Activated CD4-positive, alpha-beta memory T cell treated with anti-CD3 and anti-CD28 coated beads, Interleukin-2, amount 10 ng/mL, durations not matched to agents 7 days and 5 days (primary cell): ENCODE measurements at regions of chr14 and their contacts with region 1.

Region 1: DNA sequence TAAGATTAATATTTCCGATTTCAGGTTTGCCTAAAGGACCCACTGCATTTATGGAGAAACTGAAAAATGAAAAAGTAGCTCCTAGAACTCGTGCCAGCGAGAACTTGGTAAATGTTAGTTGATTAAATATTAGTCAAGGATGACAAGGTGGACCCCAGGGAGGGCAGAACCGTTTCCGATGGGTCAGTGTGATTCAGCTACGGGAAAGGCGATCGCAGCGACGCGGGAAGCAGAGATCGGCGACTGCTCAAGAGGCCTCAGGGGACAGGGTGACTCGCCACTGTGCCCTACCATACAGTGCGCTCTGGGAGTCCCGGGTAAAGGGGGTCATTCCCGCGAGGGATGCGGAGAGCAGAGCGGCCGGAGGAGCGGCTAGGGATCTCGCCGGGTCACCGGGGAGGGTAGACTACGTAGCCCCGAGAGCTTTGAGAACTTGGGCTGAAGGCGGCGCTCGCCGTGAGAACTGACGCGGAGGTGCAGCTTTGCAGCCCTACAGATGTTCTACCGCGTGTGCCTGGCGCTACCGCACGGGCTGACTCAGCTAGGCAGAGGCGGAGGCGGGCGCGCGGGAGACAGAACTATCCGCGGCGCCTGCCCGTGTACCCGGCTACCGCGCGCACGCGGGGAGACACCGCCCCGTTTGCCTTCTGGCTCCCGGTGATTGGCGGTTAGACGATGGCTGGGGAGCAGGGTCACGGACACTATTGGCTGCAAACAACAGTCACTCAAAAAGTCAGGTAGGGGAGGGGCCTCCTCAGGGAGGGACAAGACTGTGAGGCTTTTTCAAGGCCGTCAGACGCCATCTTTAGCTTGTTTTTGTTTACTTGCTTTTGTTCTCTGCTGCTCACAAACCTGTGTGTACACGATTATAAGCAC is 3.2 kb downstream of the C14orf93 start:
- DNase-seq: peak; percentile 98
- H3K4me3 Mint-ChIP-seq: peak overlapping the region; percentile 93
- H3K27ac Mint-ChIP-seq: peak overlapping the region; percentile 94
- H3K4me1 Mint-ChIP-seq: peaks cover 51% of the 10 kb centered on the region
- H3K27me3 Mint-ChIP-seq: no peaks in the 10 kb centered on the region

Region 2: GRCh38 chr14:22829661-22830442 is 176.9 kb before region 1 on chr14 and contains the start of gene MRPL52:
- CTCF ChIA-PET with region 1: no interaction called
- POLR2A ChIA-PET with region 1: interaction called, 10 read pairs
- DNase-seq: peak; percentile 93
- H3K4me3 Mint-ChIP-seq: peak within 1 kb of the TSS; percentile 87
- H3K27ac Mint-ChIP-seq: peak within 1 kb of the TSS; percentile 90
- H3K4me1 Mint-ChIP-seq: peaks cover 33% of the 10 kb centered on the region
- H3K27me3 Mint-ChIP-seq: no peaks in the 10 kb centered on the region
- total RNA-seq, gene MRPL52: 108 to 119 TPM

Region 3: GRCh38 chr14:22900081-22900799 is 106.5 kb before region 1 on chr14:
- CTCF ChIA-PET with region 1: no interaction called
- POLR2A ChIA-PET with region 1: no interaction called
- DNase-seq: peak; percentile 48
- H3K4me3 Mint-ChIP-seq: no peak overlapping the region
- H3K27ac Mint-ChIP-seq: peak overlapping the region; percentile 44
- H3K4me1 Mint-ChIP-seq: peaks cover 19% of the 10 kb centered on the region
- H3K27me3 Mint-ChIP-seq: no peaks in the 10 kb centered on the region

Region 4: DNA sequence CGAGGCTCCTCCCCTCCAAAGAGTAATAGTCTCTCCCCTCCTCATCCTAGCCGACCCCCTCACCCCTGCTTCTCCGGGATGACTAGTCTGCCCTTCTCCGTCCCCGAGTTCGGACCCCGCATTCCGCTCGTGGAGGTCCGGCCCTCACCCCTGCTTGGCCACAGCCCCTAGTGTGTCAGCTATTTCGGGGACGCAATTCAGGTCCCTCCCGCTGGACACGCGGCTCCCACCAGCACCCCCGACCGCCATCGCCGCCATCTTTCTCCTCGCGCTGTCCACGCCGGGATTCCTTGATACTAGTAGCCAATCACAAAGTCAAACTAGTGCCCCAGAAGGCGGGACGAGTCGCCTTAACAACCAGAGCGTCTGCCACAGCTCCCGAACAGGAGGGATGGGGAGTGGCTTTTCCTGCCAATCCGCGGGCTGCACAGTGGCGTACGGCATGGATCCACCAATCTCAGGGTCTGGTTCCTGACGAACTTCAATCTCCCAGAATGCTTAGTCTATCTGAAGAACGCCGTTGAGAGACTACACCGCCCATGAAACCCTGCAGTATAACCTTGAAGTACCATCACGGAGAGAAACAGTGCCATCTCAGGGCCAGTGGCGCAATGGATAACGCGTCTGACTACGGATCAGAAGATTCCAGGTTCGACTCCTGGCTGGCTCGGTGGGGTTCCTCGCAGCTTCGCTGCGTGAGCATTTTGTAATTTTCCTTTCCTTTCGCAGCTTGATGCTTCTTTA is 77.5 kb before region 1 on chr14 and contains the start of gene PRMT5:
- CTCF ChIA-PET with region 1: interaction called, 17 read pairs
- POLR2A ChIA-PET with region 1: interaction called, 9 read pairs
- DNase-seq: peak; percentile 97
- H3K4me3 Mint-ChIP-seq: no peak within 1 kb of the TSS
- H3K27ac Mint-ChIP-seq: no peak within 1 kb of the TSS
- H3K4me1 Mint-ChIP-seq: peaks cover 21% of the 10 kb centered on the region
- H3K27me3 Mint-ChIP-seq: no peaks in the 10 kb centered on the region
- total RNA-seq, gene PRMT5: 46.3 to 49.8 TPM

Region 5: DNA sequence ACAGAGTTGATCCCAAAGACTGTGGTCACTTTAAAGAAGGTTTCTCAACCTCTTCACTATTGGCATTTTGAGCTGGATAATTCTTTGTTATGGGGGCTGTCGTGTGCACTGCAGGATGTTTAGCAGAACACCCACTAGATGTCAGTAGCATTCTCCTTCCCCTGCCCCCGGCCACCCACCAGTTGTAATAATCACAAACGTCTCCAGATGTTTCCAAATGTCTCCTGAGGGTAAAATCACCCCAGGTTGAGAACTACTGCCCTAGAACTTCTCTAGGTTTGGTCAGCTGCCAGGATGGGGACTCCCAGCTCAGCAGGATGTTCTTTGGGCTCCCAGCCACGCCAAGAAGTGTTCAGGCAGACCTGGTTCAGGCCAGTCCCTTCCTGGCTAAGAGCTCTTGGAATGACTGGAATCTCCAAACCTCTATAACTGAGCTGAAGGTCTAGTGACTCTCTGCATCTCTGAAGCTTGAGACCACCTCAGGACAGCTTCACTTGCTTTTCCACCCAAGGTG is 12.0 kb before region 1 on chr14:
- CTCF ChIA-PET with region 1: interaction called, 32 read pairs
- POLR2A ChIA-PET with region 1: interaction called, 48 read pairs
- DNase-seq: peak; percentile 29
- H3K4me3 Mint-ChIP-seq: no peak overlapping the region
- H3K27ac Mint-ChIP-seq: no peak overlapping the region
- H3K4me1 Mint-ChIP-seq: no peaks in the 10 kb centered on the region
- H3K27me3 Mint-ChIP-seq: no peaks in the 10 kb centered on the region

Region 6: DNA sequence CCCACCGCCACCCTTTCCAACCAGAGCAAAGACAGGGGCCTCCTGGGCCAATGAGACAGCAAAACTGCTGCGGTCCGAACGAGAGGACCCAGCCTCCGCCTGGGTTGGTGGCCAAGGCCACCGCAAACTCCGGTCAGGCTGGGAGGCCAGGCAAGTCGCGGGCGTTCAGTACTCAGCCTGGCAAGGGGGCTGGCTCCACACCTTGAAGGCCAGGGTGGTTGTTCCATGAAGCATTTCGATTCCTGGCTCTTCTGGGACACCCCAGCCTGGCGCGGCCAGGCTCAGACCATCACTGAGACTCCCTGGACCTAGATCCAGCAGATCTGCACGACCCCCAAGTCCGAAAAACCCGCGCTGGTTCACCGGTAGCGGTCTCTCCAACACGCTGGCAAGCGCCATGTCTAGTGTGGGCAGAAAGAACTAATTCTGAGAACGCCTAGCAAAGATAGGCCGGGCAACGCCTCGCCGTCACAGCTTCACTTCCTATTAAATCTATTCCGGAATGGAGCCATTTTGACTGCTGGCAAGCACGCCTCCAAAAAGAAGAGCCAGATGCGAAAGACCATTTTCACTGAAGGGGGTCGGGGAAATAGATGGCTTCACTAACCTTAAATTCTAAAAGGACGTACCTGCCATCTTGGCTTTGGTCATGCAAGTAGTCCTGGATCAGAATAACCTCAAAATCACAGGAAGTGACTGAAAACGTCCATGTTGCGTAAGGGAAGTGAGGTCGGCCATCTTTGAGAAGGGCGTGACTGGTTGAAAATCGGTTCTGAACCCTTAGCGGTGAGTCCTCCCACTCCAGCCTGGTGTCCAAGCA is 27.9 kb after region 1 on chr14 and contains the start of gene PSMB5:
- CTCF ChIA-PET with region 1: interaction called, 13 read pairs
- POLR2A ChIA-PET with region 1: interaction called, 37 read pairs
- DNase-seq: peak; percentile 91
- H3K4me3 Mint-ChIP-seq: peak within 1 kb of the TSS; percentile 72
- H3K27ac Mint-ChIP-seq: peak within 1 kb of the TSS; percentile 86
- H3K4me1 Mint-ChIP-seq: peaks cover 36% of the 10 kb centered on the region
- H3K27me3 Mint-ChIP-seq: no peaks in the 10 kb centered on the region
- total RNA-seq, gene PSMB5: 55.0 to 57.5 TPM

Region 7: GRCh38 chr14:23068476-23069412 is 62.0 kb after region 1 on chr14:
- CTCF ChIA-PET with region 1: interaction called, 42 read pairs
- POLR2A ChIA-PET with region 1: interaction called, 14 read pairs
- DNase-seq: peak; percentile 80
- H3K4me3 Mint-ChIP-seq: no peak overlapping the region
- H3K27ac Mint-ChIP-seq: peak overlapping the region; percentile 36
- H3K4me1 Mint-ChIP-seq: peaks cover 37% of the 10 kb centered on the region
- H3K27me3 Mint-ChIP-seq: no peaks in the 10 kb centered on the region

Region 8: GRCh38 chr14:23102801-23103200 is 96.0 kb after region 1 on chr14:
- CTCF ChIA-PET with region 1: no interaction called
- POLR2A ChIA-PET with region 1: no interaction called
- DNase-seq: no peak
- H3K4me3 Mint-ChIP-seq: no peak overlapping the region
- H3K27ac Mint-ChIP-seq: no peak overlapping the region
- H3K4me1 Mint-ChIP-seq: peaks cover 1% of the 10 kb centered on the region
- H3K27me3 Mint-ChIP-seq: no peaks in the 10 kb centered on the region